GM12878 (cell line): ENCODE measurements at regions of chr10 and their contacts with region 1.

Region 1: DNA sequence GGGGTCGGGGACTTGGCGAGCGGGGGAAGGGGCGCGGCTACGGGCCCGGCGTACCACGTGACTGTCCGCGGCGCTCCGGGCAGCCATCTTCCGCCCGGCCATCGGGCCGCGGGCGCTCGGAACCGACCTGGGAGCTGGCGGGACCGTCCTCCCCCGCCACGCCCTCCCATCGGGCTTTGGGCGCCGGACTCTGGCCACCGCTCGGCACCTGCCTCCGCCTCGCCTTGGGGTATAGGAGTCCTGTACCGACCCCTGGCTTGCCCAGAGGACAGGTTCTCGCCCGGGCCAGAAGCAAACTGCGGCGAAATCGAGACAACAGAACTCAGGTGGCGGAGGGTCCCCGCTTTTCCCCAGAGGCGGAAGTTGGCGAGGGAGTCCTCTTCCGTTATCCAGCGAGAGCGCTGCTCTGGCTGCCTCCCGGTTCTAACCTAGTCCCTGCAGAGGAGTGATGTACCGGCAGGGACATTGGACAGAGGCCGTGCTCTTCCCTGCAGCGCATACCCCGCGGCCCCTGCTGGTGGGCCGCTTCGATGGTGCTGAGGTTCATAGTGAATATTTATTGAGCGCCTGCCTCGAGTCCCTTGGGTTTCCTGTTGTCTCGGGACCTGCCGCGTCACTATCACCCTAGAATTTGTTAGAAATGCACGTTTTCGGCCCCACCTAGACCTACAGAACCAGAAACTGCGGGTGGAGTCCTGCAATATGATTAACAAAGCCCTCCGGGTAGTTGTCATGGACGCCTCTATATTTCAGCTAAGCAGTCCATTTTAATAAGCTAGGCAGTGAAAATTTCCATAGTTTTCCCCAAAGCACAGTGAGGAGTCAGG is 1.3 kb upstream of the SGMS1 start:
- DNase-seq: no peak
- ATAC-seq: peak; percentile 69
- H3K4me3 ChIP-seq: peak overlapping the region; percentile 86
- H3K27ac ChIP-seq: peak overlapping the region; percentile 94
- H3K4me1 ChIP-seq: no peaks in the 10 kb centered on the region
- H3K27me3 ChIP-seq: no peaks in the 10 kb centered on the region
- CTCF ChIP-seq: peak; percentile 52 to 70 (median 56)
- EP300 ChIP-seq: no peak
- POLR2A ChIP-seq: peak; percentile 89
- RAD21 ChIP-seq: peak; percentile 52

Region 2: GRCh38 chr10:49177391-49178355 is 1447.4 kb before region 1 on chr10:
- CTCF ChIA-PET with region 1: no interaction called
- POLR2A ChIA-PET with region 1: no interaction called
- RAD21 ChIA-PET with region 1: no interaction called
- SMC1A ChIA-PET with region 1: no interaction called
- in situ Hi-C with region 1: loop called (anchors 25 kb)
- intact Hi-C with region 1: no loop called
- DNase-seq: peak; percentile 85
- ATAC-seq: peak; percentile 85
- H3K4me3 ChIP-seq: no peak overlapping the region
- H3K27ac ChIP-seq: peak overlapping the region; percentile 87
- H3K4me1 ChIP-seq: peaks cover 51% of the 10 kb centered on the region
- H3K27me3 ChIP-seq: no peaks in the 10 kb centered on the region
- CTCF ChIP-seq: no peak
- EP300 ChIP-seq: peak; percentile 67 to 83
- POLR2A ChIP-seq: no peak
- RAD21 ChIP-seq: peak; percentile 21; the same call in 1 of the 2 replicates

Region 3: DNA sequence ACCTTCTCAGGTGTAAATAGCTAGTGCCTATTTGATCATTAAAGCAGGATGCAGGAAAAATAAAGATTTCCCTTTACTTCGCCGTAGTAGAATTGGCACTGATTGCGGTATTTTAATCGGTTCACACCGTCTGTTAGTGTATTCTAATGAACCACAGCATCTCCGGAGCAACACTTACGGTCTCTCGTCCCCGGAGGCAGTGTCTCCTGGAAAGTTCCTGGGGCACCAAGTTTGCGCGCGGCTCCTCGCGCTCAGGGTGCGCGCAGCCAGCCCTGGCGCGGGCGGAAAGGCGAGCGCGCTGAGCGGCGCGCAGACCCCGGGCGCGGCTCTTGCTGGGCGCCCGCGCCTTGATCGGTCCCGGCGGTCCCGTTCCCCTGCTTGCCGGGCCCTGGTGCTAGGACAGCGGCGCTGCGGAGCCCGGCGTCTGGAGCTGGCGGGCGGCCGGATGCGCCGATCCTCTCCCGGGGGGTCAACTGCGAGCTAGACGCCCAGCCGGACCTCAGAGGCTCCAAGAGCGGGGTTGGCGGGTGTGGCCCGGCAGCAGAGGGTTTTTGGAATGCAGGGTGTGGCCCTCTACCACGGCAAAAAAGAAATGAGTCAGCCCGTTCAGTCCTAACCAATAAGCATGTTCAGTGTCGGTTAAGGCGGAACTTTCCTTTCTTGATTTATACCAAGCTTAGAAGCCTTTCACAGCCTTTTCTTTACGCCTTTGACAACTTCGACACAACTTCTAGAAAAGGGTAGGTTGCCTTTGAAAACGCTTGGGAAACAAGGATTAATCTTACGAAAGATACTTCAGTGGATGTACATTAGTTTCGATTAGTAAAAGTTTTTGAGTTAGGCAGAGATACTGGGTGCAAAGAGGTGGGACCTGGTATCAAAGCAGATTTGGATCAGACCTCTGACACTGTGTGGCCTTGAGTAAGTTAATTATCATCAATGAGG is 206.9 kb before region 1 on chr10:
- CTCF ChIA-PET with region 1: interaction called, 31 read pairs
- POLR2A ChIA-PET with region 1: interaction called, 4 read pairs
- RAD21 ChIA-PET with region 1: interaction called, 18 read pairs
- SMC1A ChIA-PET with region 1: interaction called, 44 read pairs
- in situ Hi-C with region 1: no loop called
- intact Hi-C with region 1: loop called (anchors 2 kb)
- DNase-seq: peak; percentile 63
- ATAC-seq: peak; percentile 84
- H3K4me3 ChIP-seq: peak overlapping the region; percentile 64
- H3K27ac ChIP-seq: peak overlapping the region; percentile 79
- H3K4me1 ChIP-seq: peaks cover 28% of the 10 kb centered on the region
- H3K27me3 ChIP-seq: no peaks in the 10 kb centered on the region
- CTCF ChIP-seq: peak in 1 of 3 experiments; percentile 17; a peak in 1 of 6 replicates
- EP300 ChIP-seq: peak in 1 of 2 experiments; percentile 34; a peak in 1 of 4 replicates
- POLR2A ChIP-seq: peak; percentile 77
- RAD21 ChIP-seq: no peak

Region 4: GRCh38 chr10:50561816-50562215 is 63.3 kb before region 1 on chr10:
- CTCF ChIA-PET with region 1: interaction called, 13 read pairs
- POLR2A ChIA-PET with region 1: no interaction called
- RAD21 ChIA-PET with region 1: interaction called, 6 read pairs
- SMC1A ChIA-PET with region 1: interaction called, 18 read pairs
- in situ Hi-C with region 1: no loop called
- intact Hi-C with region 1: loop called (anchors 2 kb)
- DNase-seq: no peak
- ATAC-seq: peak; percentile 66
- H3K4me3 ChIP-seq: no peak overlapping the region
- H3K27ac ChIP-seq: no peak overlapping the region
- H3K4me1 ChIP-seq: no peaks in the 10 kb centered on the region
- H3K27me3 ChIP-seq: no peaks in the 10 kb centered on the region
- CTCF ChIP-seq: peak; percentile 53 to 69 (median 58)
- EP300 ChIP-seq: no peak
- POLR2A ChIP-seq: no peak
- RAD21 ChIP-seq: peak; percentile 64

Region 5: GRCh38 chr10:50636618-50637579 is 11.8 kb after region 1 on chr10:
- CTCF ChIA-PET with region 1: interaction called, 3 read pairs
- POLR2A ChIA-PET with region 1: interaction called, 6 read pairs
- RAD21 ChIA-PET with region 1: interaction called, 7 read pairs
- SMC1A ChIA-PET with region 1: interaction called, 18 read pairs
- in situ Hi-C with region 1: no loop called
- intact Hi-C with region 1: no loop called
- DNase-seq: no peak
- ATAC-seq: peak; percentile 97
- H3K4me3 ChIP-seq: no peak overlapping the region
- H3K27ac ChIP-seq: no peak overlapping the region
- H3K4me1 ChIP-seq: peaks cover 8% of the 10 kb centered on the region; the same call in 1 of the 2 replicates
- H3K27me3 ChIP-seq: no peaks in the 10 kb centered on the region
- CTCF ChIP-seq: no peak
- EP300 ChIP-seq: 0 out of 4 replicates have a peak, but pooled peaks of 1 of the 2 experiments have one; percentile 26
- POLR2A ChIP-seq: no peak
- RAD21 ChIP-seq: no peak

Region 6: GRCh38 chr10:50658165-50658564 is 33.1 kb after region 1 on chr10:
- CTCF ChIA-PET with region 1: interaction called, 8 read pairs
- POLR2A ChIA-PET with region 1: no interaction called
- RAD21 ChIA-PET with region 1: interaction called, 15 read pairs
- SMC1A ChIA-PET with region 1: interaction called, 20 read pairs
- in situ Hi-C with region 1: no loop called
- intact Hi-C with region 1: no loop called
- DNase-seq: no peak
- ATAC-seq: peak; percentile 4; the same call in 2 of the 3 replicates
- H3K4me3 ChIP-seq: no peak overlapping the region
- H3K27ac ChIP-seq: no peak overlapping the region
- H3K4me1 ChIP-seq: peaks cover 8% of the 10 kb centered on the region
- H3K27me3 ChIP-seq: no peaks in the 10 kb centered on the region
- CTCF ChIP-seq: no peak
- EP300 ChIP-seq: no peak
- POLR2A ChIP-seq: no peak
- RAD21 ChIP-seq: no peak

Region 7: DNA sequence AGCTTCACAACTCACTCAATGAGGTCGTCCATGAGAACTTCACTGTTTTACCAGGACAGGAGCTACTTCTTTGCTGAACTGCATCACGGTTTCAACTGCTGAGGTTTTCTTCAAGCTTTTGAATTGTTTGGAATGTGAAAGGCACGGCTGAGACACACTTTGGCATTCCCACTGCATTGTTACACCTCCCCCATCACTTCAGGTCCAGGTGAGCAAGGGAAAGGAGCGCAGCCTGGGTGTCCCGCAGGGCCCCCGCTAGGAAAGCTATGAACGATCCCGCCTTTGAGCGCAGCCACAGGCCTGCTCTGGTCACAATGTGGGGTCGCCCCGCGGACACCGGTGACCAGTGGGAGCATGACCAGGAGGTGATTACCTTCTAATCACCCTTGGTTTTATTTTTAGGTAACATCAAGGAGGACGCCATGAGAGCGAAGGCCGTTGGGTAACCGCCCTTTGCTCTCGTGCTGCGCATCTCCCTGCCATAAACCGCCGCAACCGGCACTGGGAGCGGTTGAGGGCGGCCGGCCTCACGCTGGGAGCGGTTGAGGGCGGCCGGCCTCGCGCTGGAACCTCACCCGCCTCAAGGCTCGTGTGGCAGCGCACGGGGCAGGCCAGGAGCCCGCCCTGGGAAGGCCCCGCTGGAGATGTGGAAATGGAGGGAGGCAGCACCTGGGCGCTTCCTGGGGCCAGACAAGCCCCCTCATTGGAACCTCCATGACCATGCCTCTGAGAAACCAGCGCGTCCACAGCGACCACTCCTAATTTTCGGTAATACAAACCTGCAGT is 49.6 kb after region 1 on chr10:
- CTCF ChIA-PET with region 1: no interaction called
- POLR2A ChIA-PET with region 1: no interaction called
- RAD21 ChIA-PET with region 1: no interaction called
- SMC1A ChIA-PET with region 1: no interaction called
- in situ Hi-C with region 1: no loop called
- intact Hi-C with region 1: no loop called
- DNase-seq: no peak
- ATAC-seq: no peak
- H3K4me3 ChIP-seq: no peak overlapping the region
- H3K27ac ChIP-seq: no peak overlapping the region
- H3K4me1 ChIP-seq: no peaks in the 10 kb centered on the region
- H3K27me3 ChIP-seq: no peaks in the 10 kb centered on the region
- CTCF ChIP-seq: no peak
- EP300 ChIP-seq: no peak
- POLR2A ChIP-seq: no peak
- RAD21 ChIP-seq: no peak